HEK293 (cell line): ENCODE measurements at regions of chr1 and their contacts with region 1.

Region 1: DNA sequence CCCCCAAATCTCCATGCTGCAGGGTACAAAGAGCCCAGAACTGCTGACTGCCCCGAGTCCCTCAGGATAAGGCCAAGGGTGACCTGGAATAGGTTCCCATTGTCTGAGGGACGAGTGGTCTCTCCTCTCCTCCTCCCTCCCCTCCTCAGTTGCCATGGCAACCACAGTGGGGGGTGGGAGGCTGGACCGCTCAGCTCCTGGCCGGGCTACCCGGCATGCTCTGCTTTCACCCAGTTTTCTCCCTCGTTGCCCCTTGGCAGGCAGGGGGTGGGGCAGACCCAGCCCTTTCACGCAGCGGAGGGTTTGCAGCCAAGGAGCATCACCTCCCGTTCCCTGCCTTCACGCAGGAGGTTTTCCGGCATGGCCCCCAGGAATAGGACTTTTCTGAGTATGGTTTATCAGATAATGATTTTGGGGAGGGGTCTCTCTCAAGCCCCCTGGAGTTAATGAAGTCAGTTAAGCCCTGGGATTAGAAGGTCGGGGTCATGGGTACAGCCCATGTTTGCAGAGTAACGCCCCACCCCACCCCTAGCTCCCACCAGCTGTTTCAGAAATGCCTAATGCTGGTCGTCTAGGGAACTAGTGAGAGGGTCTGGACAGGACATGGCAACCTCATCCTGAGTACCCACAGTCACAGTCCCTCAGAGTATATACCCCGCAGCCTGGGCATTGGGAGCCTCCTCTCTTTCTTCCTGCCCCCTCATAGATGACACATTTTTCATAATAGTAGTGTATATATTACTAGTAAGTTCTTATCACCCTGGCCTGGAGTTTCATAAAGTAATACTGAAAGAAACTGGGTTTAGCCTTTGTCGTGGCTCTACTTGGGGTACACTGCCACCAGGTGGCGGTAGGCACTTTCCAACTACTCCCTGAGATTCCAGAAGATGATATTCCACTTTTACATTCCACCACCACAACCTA is 20.7 kb downstream of the C1QB start:
- H3K4me3 ChIP-seq: no peak overlapping the region
- H3K27ac ChIP-seq: no peak overlapping the region
- H3K4me1 ChIP-seq: no peaks in the 10 kb centered on the region
- CTCF ChIP-seq: no peak; the same call in 1 of the 2 replicates

Region 2: DNA sequence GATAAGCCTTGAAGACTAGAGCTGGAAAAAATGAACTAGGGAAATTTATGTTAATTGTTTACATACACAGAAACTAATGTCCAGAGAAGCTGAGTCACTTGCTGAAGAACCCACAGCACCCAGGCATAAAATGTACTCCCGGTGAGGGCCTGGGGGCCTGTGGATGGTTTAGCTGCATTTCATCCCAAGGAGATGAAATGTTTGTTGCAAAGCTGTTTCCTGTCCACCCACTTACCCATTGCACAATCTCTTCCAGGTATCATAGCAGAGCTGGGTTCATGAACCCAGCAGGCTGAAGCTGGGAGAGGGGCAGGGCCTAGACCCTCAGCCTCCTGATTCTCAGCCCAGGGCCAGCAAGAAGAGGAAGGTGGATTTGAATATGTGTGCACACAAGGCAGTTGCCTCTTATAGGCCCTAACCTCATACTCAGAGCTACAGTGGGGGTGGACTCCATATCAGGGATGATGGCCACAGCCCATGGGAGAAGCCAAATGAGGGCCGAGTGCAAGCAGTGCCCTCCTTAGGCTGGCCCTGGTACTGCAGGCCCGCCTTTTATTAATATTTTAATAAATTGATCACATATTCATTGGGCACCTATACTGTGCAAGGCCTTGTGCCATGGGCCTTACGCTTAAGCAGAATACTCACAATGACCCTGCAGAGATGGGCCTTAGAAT is 188.2 kb after region 1 on chr1:
- CTCF ChIA-PET with region 1: interaction called, 22 read pairs
- POLR2A ChIA-PET with region 1: no interaction called
- H3K4me3 ChIP-seq: no peak overlapping the region
- H3K27ac ChIP-seq: no peak overlapping the region
- H3K4me1 ChIP-seq: no peaks in the 10 kb centered on the region
- CTCF ChIP-seq: peak; percentile 29; the same call in 1 of the 2 replicates

Region 3: DNA sequence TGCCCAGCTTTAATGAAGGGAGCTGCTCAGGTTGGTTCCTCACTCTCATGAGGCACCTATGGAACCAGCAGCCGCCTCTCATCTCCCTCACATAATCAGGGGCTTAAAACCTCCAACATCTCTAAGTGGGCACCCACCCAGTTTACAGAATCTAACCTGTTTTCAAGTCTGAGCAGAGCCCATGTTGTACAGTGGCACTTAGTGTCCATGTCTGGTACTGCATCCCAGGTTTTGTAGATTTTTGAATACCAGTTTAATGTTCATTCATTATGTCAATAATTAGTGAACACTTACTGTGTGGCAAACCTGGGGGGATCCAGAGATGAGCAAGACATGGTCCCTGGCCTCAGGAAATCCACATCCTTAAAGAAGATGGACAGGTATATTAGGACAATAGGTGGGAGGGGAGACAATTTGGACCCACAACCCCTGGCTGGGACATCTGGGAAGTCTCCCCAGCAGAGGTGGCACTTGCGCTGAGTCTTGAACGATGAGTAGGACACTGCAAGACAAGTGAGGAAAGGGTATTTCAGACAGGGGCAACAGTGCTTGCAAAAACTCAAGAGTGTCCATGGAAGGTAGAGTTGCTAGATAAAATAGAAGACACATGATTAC is 215.6 kb after region 1 on chr1:
- CTCF ChIA-PET with region 1: interaction called, 12 read pairs
- POLR2A ChIA-PET with region 1: no interaction called
- H3K4me3 ChIP-seq: no peak overlapping the region
- H3K27ac ChIP-seq: no peak overlapping the region
- H3K4me1 ChIP-seq: no peaks in the 10 kb centered on the region
- CTCF ChIP-seq: no peak

Region 4: DNA sequence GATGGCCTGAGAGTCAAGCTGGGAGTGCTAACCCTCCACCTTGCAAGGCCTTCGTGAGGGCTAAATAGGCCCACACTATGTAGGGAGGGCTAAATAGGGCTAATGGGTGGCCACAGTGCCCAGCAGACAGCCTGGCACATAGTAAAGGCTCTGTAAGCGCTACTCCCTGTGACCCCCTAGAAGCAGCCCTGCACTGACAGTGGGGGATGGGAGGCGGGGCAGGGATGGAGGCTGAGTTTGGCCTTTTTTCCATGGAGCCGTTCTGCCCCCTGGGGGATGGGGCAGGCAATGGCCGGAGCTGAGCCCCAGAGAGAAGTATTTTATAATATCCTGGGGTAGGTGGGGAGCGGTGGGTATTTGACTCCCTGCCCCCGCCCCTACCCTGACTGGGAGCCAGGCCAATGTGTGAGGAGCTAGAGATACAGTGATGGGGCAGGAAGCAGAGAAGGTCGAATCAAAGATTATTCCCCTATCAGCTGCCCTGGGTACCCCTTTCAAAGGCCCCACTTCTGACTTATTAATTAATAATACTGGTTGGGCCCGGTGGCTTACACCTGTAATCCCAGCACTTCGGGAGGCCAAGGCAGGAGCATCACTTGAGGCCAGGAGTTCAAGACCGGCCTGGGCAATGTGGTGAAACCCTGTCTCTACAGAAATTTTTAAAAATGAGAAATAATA is 256.6 kb after region 1 on chr1:
- CTCF ChIA-PET with region 1: interaction called, 29 read pairs
- POLR2A ChIA-PET with region 1: no interaction called
- H3K4me3 ChIP-seq: no peak overlapping the region
- H3K27ac ChIP-seq: no peak overlapping the region
- H3K4me1 ChIP-seq: no peaks in the 10 kb centered on the region
- CTCF ChIP-seq: peak; percentile 63